ENCODE measurements at regions of chr4 and their contacts with region 1.

Region 1: GRCh38 chr4:145234091-145234706 is 53.8 kb upstream of the OTUD4 start:
- DNase-seq: peak; percentile 65
- H3K4me3 ChIP-seq: no peak overlapping the region
- H3K27ac ChIP-seq: no peak overlapping the region
- H3K4me1 ChIP-seq: peaks cover 8% of the 10 kb centered on the region
- H3K27me3 ChIP-seq: no peaks in the 10 kb centered on the region
- CTCF ChIP-seq: peak; percentile 60 to 62
- POLR2A ChIP-seq: no peak

Region 2: GRCh38 chr4:145154573-145154972 is 79.6 kb before region 1 on chr4:
- CTCF ChIA-PET with region 1: interaction called, 3 read pairs
- POLR2A ChIA-PET with region 1: no interaction called
- dilution Hi-C with region 1: no loop called
- intact Hi-C with region 1: loop called (anchors 1 kb)
- DNase-seq: peak; percentile 73
- H3K4me3 ChIP-seq: no peak overlapping the region
- H3K27ac ChIP-seq: peak overlapping the region; percentile 46
- H3K4me1 ChIP-seq: peaks cover 28% of the 10 kb centered on the region
- H3K27me3 ChIP-seq: no peaks in the 10 kb centered on the region
- CTCF ChIP-seq: peak; percentile 53 to 66
- POLR2A ChIP-seq: no peak

Region 3: DNA sequence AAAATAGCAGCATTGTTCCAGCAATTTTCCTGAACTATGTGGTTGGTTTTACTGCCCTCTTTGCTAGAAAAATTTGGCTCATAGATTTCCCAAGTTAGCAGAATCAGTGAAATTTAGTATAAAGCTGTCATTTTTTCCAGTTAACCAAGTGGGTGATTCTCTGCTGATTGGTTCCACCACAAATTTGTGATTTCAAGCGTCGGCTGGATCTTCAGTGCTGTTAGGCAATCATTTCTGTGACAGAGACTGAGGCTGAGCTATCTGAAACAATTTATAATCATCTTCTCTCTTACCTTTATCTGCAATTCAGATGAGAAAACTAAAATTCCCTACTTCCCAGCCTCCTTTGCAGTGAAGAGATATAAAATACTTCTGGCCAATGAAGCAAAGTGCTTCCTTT is 14.8 kb after region 1 on chr4:
- CTCF ChIA-PET with region 1: interaction called, 10 read pairs
- POLR2A ChIA-PET with region 1: no interaction called
- dilution Hi-C with region 1: no loop called
- intact Hi-C with region 1: no loop called
- DNase-seq: no peak
- H3K4me3 ChIP-seq: no peak overlapping the region
- H3K27ac ChIP-seq: no peak overlapping the region
- H3K4me1 ChIP-seq: no peaks in the 10 kb centered on the region
- H3K27me3 ChIP-seq: peaks cover 15 to 16% of the 10 kb centered on the region in 2 experiments
- CTCF ChIP-seq: no peak
- POLR2A ChIP-seq: no peak

Region 4: DNA sequence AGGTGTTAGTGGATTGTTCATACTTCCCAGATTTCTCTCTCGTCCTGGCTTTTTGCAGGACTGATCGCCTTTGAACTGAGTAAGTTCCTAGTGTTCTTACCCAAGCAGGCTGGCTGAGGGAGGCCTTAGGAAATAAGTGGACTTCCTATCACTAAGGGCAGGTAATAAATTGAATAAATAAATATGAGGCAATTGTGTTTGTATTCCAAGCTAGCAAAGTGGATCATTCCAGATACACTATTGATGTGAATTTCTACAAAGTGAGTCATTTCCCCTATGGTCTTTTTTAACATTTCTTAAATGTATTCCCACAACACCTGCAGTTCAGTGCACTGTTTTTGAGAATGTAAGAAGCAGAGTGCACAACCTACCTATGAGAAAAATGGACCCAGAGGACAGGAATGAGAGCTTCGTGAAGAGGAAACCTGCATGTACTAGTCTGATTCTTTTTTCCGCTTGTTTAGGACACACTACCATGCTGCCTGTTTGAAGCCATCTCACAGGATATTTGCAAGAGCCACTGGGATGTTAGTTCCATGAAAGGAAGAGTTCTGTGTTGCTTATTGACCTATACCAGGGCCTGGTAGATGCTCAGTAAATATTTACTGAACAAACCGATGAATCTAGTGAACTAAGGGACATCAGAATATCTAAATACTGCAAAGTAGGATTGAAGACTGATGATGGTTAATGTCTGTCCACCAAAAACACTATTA is 218.4 kb after region 1 on chr4:
- CTCF ChIA-PET with region 1: no interaction called
- POLR2A ChIA-PET with region 1: no interaction called
- dilution Hi-C with region 1: loop called (anchors 25 kb)
- intact Hi-C with region 1: no loop called
- DNase-seq: peak; percentile 55
- H3K4me3 ChIP-seq: no peak overlapping the region
- H3K27ac ChIP-seq: peak overlapping the region; percentile 45
- H3K4me1 ChIP-seq: peaks cover 20% of the 10 kb centered on the region
- H3K27me3 ChIP-seq: peaks cover 0 to 4% of the 10 kb centered on the region in 2 experiments
- CTCF ChIP-seq: no peak
- POLR2A ChIP-seq: no peak

Region 5: GRCh38 chr4:145557720-145558119 is 323.5 kb after region 1 on chr4:
- CTCF ChIA-PET with region 1: interaction called, 51 read pairs
- POLR2A ChIA-PET with region 1: no interaction called
- dilution Hi-C with region 1: no loop called
- intact Hi-C with region 1: loop called (anchors 1 kb)
- DNase-seq: peak; percentile 81
- H3K4me3 ChIP-seq: no peak overlapping the region
- H3K27ac ChIP-seq: no peak overlapping the region
- H3K4me1 ChIP-seq: peaks cover 11% of the 10 kb centered on the region
- H3K27me3 ChIP-seq: no peaks in the 10 kb centered on the region
- CTCF ChIP-seq: peak; percentile 88 to 89
- POLR2A ChIP-seq: no peak

Measured in endothelial cell of umbilical vein (primary cell).